ENCODE measurements at regions of chr6 and their contacts with region 1.

Region 1: DNA sequence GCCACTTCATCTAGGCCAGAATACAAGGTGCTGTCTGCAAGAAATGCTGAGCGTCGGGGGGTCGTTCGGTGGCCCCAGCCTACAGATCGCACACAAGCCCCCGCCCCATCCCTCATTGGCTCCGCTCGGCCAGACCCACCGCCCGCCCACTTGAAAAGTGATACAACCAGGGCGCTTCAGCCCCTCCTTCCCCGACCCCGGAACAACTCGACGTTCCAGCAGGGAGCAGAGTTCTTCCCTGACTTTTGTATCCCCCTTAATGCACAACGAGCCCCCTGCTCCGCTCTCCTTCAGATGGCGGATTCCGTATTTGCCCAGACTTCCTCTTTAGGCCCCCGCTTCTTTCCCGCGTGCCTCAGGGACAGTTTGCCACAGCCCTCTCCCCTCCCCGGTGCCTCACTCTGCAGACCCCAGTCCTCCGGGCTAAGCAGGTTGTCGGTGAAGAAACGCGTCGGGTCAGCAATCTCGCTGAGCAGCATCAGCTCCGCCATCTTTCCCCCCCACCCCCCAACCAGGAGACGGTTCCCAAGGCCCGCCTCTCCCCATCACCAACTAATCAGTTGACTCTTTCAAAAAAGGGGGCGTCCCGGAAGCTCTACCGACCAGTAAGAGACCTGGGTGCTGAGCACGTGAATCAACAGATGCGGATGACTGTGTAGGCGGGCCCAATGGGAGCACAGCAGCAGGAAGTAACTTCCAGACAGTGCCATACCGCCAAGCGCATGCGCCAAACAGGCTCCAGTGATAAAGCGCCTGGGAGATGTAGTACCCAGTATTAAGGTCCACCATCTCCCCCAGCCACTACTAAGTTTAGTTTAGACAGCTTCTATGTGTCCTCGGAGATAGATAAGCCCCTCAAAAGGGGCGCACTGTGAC is at the start of gene ATF6B:
- DNase-seq: peak; percentile 99
- H3K4me3 Mint-ChIP-seq: peak within 1 kb of the TSS; percentile 100
- H3K27ac Mint-ChIP-seq: peak within 1 kb of the TSS; percentile 96
- H3K4me1 Mint-ChIP-seq: peaks cover 43% of the 10 kb centered on the region
- H3K27me3 Mint-ChIP-seq: no peaks in the 10 kb centered on the region
- total RNA-seq, gene ATF6B: 68.2 to 69.4 TPM

Region 2: GRCh38 chr6:31702819-31703522 is 425.0 kb before region 1 on chr6 and contains the start of gene ABHD16A:
- CTCF ChIA-PET with region 1: no interaction called
- intact Hi-C with region 1: loop called (anchors 1 kb)
- DNase-seq: peak; percentile 99
- H3K4me3 Mint-ChIP-seq: peak within 1 kb of the TSS; percentile 99
- H3K27ac Mint-ChIP-seq: peak within 1 kb of the TSS; percentile 97
- H3K4me1 Mint-ChIP-seq: peaks cover 22% of the 10 kb centered on the region
- H3K27me3 Mint-ChIP-seq: no peaks in the 10 kb centered on the region
- total RNA-seq, gene ABHD16A: 19.9 to 22.5 TPM

Region 3: DNA sequence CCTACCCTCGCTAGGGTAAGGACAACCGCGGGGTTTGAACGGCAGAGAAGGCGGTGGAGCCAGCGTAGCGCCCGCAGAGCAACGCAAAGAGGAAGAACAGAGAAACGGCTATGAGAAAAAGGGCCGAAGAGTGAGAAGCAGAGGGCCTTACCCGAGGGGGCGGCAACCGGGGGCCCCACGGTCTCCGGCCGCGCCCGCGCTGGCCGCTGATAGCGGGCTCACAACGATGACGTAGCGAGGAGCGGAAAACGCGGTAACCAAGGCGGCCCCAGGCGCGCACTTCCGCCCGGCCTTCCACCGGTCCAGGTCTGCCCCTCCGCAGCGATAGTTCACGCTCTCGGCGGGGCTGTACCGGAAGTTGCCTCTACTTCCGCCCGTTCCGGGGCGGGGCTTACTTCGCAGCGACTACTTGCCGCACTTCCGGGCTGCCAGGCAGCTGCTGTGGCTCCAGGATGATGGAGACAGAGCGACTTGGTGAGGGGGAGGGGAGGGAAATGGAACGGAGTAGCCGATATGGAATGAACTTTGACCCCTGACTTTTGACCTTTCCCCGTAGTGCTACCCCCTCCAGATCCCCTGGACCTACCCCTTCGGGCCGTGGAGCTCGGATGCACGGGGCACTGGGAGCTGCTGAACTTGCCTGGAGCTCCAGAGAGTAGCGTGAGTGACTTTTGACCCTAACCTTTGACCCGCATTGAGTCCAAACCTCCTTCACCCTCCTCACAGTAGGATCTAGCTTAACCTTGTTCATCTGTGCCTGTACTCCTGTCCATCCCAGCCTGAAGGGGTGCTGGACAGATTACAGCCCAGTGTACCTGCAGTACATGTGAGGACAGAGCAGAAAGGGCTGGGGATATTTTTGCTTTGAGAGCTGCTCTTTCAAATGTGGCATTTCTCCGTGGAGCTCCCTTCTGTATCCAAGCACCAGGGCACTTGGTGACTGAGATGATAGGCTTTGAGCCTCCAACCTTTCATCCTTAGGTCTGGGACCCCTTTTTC is 168.9 kb before region 1 on chr6 and contains the starts of genes NELFE and SKIC2:
- CTCF ChIA-PET with region 1: no interaction called
- intact Hi-C with region 1: loop called (anchors 1 kb)
- DNase-seq: peak; percentile 99
- H3K4me3 Mint-ChIP-seq: peak within 1 kb of the TSS; percentile 95
- H3K27ac Mint-ChIP-seq: peak within 1 kb of the TSS; percentile 94
- H3K4me1 Mint-ChIP-seq: peaks cover 41% of the 10 kb centered on the region
- H3K27me3 Mint-ChIP-seq: no peaks in the 10 kb centered on the region
- total RNA-seq, gene NELFE: 83.2 to 87.4 TPM
- total RNA-seq, gene SKIC2: 93.6 to 101 TPM

Region 4: DNA sequence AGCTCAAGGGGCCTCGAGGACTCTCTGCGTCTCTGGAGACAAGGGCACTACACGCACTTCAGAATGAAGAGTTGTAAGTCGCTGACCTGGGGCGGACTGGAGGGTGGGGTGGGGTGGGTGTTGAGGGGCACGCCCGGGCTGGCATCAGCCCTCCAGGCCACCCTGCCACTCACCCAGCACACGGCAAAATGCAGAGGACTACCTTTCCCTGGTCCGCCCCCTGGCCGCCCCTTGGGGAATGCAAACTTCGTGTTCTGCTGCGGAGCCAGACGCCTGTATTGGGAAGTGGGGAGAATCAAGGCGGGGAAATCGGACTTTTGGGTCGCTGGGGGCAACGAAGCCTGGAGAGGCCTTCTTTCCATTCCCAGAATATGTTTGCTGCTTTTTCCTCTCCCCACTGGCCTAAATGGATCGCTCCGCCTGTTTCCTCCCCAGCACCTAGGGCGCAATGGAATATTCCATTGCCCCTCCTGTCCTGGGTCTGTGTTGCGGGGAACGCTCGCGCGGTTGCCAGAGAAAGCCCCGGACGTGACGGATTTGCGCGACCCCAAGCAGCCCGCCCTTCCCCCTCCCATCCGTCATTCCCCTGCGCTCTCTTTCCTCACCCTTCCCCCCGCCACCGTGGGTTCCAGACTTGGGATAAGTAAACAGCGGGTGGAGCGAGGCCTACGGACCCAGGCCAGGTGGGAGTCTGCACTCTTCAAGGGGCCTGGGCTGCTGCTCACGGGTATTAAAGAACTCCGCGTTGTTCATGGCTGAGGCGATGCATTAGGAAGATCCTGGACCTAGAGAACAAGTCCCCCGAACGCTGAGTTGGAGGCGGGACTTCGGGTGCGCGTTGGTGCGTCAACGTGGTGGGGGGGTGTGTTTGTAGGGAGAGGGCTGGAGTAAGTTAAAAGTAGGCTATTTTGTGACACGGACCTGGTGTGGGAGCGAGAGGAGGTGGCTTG is 25.9 kb after region 1 on chr6 and contains the start of gene PPT2:
- CTCF ChIA-PET with region 1: interaction called, 3 read pairs
- intact Hi-C with region 1: loop called (anchors 1 kb)
- DNase-seq: peak; percentile 90
- H3K4me3 Mint-ChIP-seq: peak within 1 kb of the TSS; percentile 99
- H3K27ac Mint-ChIP-seq: peak within 1 kb of the TSS; percentile 88
- H3K4me1 Mint-ChIP-seq: peaks cover 46% of the 10 kb centered on the region
- H3K27me3 Mint-ChIP-seq: peaks cover 7% of the 10 kb centered on the region
- total RNA-seq, gene PPT2: 13.2 to 14.8 TPM

Region 5: DNA sequence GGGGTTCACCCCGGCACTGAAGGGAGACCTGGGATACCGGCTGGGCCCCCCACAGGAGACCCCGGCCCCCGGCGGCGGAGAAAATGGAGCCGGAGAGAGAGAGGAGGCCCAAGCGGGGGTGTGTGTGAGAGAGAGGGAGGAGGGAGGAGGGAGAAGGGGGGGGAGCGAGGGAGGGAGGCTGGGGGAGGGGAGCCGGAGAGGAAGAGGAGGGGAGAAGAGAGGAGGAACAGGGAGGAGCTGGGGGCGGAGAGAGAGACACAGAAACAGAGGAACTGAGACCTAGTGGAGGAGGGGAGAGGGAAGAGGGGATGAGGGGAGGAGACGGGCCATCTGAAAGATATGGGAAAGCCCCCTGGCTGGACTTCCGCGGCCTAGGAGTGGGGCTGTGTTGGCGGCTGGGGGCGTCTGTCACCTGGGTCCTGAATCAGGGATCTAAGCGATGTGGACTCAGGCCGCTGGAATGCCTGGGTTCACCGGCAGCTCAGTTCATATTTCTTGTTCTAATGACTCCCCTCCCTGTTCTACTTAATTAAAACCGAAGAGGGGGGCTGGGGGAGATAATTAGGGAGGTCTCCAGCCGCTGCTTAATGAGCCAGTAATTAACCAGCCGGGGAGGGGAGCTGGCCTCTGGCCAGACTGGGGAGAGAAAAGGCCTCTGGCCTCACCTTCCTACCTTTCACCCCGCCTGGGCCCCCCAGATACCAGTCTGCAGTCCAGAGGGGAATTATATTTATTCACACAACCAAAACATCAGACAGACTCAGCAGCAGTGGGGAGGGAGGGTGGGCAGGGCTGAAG is 62.3 kb after region 1 on chr6 and contains the start of gene PBX2:
- CTCF ChIA-PET with region 1: interaction called, 5 read pairs
- intact Hi-C with region 1: loop called (anchors 1 kb)
- DNase-seq: peak; percentile 93
- H3K4me3 Mint-ChIP-seq: peak within 1 kb of the TSS; percentile 95
- H3K27ac Mint-ChIP-seq: peak within 1 kb of the TSS; percentile 99
- H3K4me1 Mint-ChIP-seq: peaks cover 66% of the 10 kb centered on the region
- H3K27me3 Mint-ChIP-seq: no peaks in the 10 kb centered on the region
- total RNA-seq, gene PBX2: 46.5 to 47.7 TPM

Region 6: GRCh38 chr6:32853541-32854375 is 725.8 kb after region 1 on chr6 and contains the starts of genes PSMB9 and TAP1:
- CTCF ChIA-PET with region 1: no interaction called
- intact Hi-C with region 1: loop called (anchors 2 kb)
- DNase-seq: peak; percentile 98
- H3K4me3 Mint-ChIP-seq: peak within 1 kb of the TSS; percentile 100
- H3K27ac Mint-ChIP-seq: peak within 1 kb of the TSS; percentile 100
- H3K4me1 Mint-ChIP-seq: peaks cover 67% of the 10 kb centered on the region
- H3K27me3 Mint-ChIP-seq: no peaks in the 10 kb centered on the region
- total RNA-seq, gene PSMB9: 238 to 241 TPM
- total RNA-seq, gene TAP1: 187 TPM

Region 7: GRCh38 chr6:33075568-33076405 is 947.8 kb after region 1 on chr6 and contains the start of gene HLA-DPB1:
- CTCF ChIA-PET with region 1: no interaction called
- intact Hi-C with region 1: no loop called
- DNase-seq: no peak
- H3K4me3 Mint-ChIP-seq: peak within 1 kb of the TSS; percentile 62
- H3K27ac Mint-ChIP-seq: no peak within 1 kb of the TSS
- H3K4me1 Mint-ChIP-seq: peaks cover 25% of the 10 kb centered on the region
- H3K27me3 Mint-ChIP-seq: peaks cover 4% of the 10 kb centered on the region
- total RNA-seq, gene HLA-DPB1: 2.8 to 4.0 TPM

Measured in activated naive CD4-positive, alpha-beta T cell treated with anti-CD3 and anti-CD28 coated beads for 36 hours (primary cell).